ENCODE measurements at regions of chr14 and their contacts with region 1.

Region 1: DNA sequence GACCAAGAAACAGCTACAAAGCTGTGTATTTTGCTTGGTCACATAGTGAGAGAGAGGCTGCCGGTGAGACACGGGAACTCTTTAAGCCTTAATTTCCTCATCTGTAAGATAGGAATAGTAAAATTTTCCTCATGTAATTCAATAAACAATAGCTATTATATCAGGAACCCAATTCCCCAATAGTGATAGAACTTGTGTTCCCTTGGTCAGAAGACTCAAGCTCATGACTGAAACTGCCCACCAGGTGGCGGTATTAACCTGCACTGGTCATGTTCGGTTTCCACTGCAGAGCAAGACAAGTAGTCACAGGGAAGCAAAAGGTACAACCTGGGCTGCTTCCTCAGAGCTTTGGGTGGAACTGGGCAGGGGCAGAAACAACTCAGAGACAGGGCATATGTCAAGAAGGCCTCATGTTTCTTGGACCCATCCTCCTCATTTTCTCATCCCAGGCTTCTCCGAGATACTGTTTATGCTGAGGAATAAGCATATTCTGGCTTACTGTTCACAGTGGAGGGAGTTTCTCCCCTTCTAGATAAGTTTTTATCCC is 4.2 kb upstream of the AJUBA start:
- DNase-seq: peak; percentile 90
- H3K4me3 Mint-ChIP-seq: no peak overlapping the region
- H3K27ac Mint-ChIP-seq: no peak overlapping the region
- H3K4me1 Mint-ChIP-seq: peaks cover 2% of the 10 kb centered on the region
- H3K27me3 Mint-ChIP-seq: no peaks in the 10 kb centered on the region

Region 2: DNA sequence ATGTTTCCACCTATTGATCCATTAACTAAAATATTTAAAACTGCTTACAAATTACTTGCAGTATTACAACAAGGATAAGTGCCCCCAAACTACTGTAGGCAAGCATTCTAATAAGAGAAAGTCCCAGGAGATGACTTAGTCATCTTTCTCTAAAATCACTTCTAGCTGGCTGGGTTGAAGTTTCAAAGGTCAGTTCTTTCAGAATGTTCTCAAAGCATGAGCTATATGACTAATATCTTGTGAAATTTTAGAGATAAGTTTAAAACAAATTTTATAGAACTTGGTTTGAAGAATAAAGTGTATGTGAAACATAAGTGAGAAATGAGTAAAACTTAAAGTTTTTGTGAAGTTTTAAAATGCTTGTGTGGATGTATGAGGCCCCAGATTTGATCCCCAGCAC is 318.2 kb before region 1 on chr14:
- CTCF ChIA-PET with region 1: no interaction called
- POLR2A ChIA-PET with region 1: no interaction called
- DNase-seq: no peak
- H3K4me3 Mint-ChIP-seq: no peak overlapping the region
- H3K27ac Mint-ChIP-seq: no peak overlapping the region
- H3K4me1 Mint-ChIP-seq: peaks cover 7% of the 10 kb centered on the region
- H3K27me3 Mint-ChIP-seq: peaks cover 7% of the 10 kb centered on the region

Region 3: GRCh38 chr14:22929104-22929847 is 57.3 kb before region 1 on chr14 and contains the start of gene PRMT5:
- CTCF ChIA-PET with region 1: interaction called, 26 read pairs
- POLR2A ChIA-PET with region 1: interaction called, 10 read pairs
- DNase-seq: peak; percentile 97
- H3K4me3 Mint-ChIP-seq: no peak within 1 kb of the TSS
- H3K27ac Mint-ChIP-seq: no peak within 1 kb of the TSS
- H3K4me1 Mint-ChIP-seq: peaks cover 21% of the 10 kb centered on the region
- H3K27me3 Mint-ChIP-seq: no peaks in the 10 kb centered on the region
- total RNA-seq, gene PRMT5: 46.3 to 49.8 TPM

Region 4: DNA sequence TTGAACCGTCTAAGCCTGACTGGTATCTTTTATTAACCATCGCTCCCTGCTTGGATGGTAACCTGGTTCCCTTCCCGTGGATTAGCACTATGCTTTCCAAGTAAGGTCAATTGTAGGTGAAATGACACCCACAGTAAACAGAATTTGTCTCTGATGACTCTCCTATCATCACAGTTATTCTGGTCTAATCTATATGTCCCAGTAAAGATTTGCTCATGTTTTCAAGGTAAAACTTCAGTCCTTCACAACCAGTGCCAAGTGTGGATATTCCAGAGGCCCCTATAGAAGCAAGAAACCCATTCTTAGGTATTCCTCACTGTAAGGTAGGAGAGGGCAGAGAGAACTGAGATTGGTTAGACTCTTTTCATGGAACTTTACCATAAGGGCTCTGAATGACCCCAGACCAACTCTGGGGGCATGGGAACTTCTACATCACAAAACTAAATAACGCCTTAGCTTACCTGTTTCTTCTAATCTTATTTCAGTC is 19.8 kb before region 1 on chr14:
- CTCF ChIA-PET with region 1: interaction called, 165 read pairs
- POLR2A ChIA-PET with region 1: interaction called, 10 read pairs
- DNase-seq: no peak
- H3K4me3 Mint-ChIP-seq: no peak overlapping the region
- H3K27ac Mint-ChIP-seq: no peak overlapping the region
- H3K4me1 Mint-ChIP-seq: no peaks in the 10 kb centered on the region
- H3K27me3 Mint-ChIP-seq: peaks cover 4% of the 10 kb centered on the region

Region 5: GRCh38 chr14:23006544-23007419 is 20.2 kb after region 1 on chr14:
- CTCF ChIA-PET with region 1: interaction called, 54 read pairs
- POLR2A ChIA-PET with region 1: interaction called, 48 read pairs
- DNase-seq: peak; percentile 98
- H3K4me3 Mint-ChIP-seq: peak overlapping the region; percentile 93
- H3K27ac Mint-ChIP-seq: peak overlapping the region; percentile 94
- H3K4me1 Mint-ChIP-seq: peaks cover 51% of the 10 kb centered on the region
- H3K27me3 Mint-ChIP-seq: no peaks in the 10 kb centered on the region

Region 6: DNA sequence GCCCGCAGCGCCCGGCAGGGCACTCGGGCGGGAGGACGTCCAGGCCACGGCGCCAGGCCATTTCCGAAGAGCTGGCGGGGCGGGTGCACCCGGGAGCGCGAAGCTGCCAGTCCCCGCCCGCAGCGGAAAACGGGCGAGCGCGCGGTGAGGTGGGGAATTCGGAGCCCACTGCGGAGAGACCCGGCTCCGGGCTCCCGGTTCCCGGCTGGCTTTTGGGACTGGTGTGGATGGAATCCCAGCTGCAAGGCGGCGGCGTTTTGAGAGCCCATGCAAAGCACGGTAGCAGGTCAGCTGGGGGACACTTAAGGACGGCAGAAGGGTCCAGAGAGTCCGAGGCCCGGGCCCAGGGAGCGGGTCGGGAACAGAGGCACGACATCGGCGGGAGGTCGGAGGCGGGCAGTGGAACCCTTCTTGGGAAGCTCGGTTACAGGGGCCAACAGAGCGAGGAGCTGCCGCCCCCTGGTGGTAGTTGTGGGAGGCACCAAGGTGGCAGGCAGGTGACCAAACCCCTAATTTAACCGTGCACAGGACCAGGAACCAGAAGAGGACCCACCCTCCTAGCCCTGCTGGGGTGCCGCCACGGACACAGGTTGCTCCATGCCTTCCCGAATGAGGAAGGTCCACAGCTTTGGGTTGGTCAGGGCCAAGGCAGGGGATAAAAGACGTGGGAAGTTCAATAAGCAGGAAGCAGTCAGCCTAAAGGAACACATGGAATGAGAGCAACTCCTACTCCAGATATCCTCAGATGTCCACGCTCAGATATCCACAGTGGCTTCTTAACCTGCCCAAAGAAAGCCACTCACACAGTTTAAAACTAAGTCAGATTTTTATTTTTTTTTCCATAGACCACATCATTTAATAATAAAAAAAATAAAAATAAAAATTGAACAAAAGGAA is 71.4 kb after region 1 on chr14:
- CTCF ChIA-PET with region 1: interaction called, 332 read pairs
- POLR2A ChIA-PET with region 1: interaction called, 37 read pairs
- DNase-seq: peak; percentile 89
- H3K4me3 Mint-ChIP-seq: peak overlapping the region; percentile 77
- H3K27ac Mint-ChIP-seq: peak overlapping the region; percentile 58
- H3K4me1 Mint-ChIP-seq: peaks cover 17% of the 10 kb centered on the region
- H3K27me3 Mint-ChIP-seq: peaks cover 8% of the 10 kb centered on the region

Measured in activated CD4-positive, alpha-beta memory T cell treated with anti-CD3 and anti-CD28 coated beads, Interleukin-2, amount 10 ng/mL, durations not matched to agents 7 days and 5 days (primary cell).